Endothelial cell of umbilical vein (primary cell): ENCODE measurements at regions of chr7 and their contacts with region 1.

Region 1: DNA sequence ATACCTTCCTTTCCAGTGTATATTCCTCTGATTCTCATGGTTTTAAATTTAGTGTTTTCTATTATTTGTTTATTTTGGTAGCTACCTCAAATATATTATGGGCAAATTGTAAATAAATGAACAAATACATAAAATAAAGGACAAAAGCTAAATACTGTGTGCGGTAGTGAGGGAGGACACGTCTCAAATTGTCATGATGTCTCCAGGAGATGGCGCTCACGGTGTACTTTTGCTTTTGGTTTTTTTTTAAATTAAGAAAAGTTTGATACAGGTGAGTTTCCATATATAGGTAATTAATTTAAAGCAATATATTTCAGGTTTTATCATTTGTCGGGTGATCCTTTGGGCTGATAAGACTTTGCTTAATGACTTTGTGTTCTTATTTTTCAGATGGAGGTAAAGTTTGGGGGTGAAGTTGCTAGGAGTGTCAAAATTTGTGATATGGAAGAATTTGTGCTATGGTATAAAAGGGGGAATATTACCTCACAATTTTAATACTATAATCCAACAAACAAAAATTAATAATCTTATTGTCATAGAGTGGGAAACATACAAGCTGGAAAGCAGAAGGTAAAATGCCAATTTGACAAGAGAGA is 68.4 kb upstream of the TMEM229A start:
- DNase-seq: peak; percentile 44
- H3K4me3 ChIP-seq: no peak overlapping the region
- H3K27ac ChIP-seq: no peak overlapping the region
- H3K4me1 ChIP-seq: no peaks in the 10 kb centered on the region
- H3K27me3 ChIP-seq: no peaks in the 10 kb centered on the region
- CTCF ChIP-seq: peak; percentile 43 to 57
- POLR2A ChIP-seq: no peak

Region 2: DNA sequence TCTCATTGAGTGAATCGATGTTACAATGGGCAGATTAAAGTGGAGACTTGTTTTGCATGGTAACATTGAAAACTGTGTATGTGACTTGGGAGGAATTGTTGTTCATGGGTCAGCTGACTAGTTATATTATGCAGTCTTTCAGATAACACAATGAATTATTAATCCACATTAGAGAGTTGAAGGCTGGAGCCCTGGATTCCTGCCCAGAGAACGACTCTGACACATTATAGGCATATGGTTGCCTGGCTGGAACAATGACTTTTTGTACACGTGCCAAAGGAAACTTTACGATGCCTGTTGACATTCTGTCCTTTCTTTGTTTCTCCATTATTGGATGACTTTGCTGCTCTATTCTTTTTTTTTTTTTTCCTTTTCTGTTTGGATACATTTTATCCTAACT is 16.1 kb before region 1 on chr7:
- CTCF ChIA-PET with region 1: interaction called, 39 read pairs
- POLR2A ChIA-PET with region 1: no interaction called
- dilution Hi-C with region 1: no loop called
- intact Hi-C with region 1: no loop called
- DNase-seq: peak; percentile 99
- H3K4me3 ChIP-seq: no peak overlapping the region
- H3K27ac ChIP-seq: peak overlapping the region; percentile 38
- H3K4me1 ChIP-seq: peaks cover 23% of the 10 kb centered on the region
- H3K27me3 ChIP-seq: no peaks in the 10 kb centered on the region
- CTCF ChIP-seq: no peak
- POLR2A ChIP-seq: no peak

Region 3: GRCh38 chr7:124113045-124113444 is 11.8 kb after region 1 on chr7:
- CTCF ChIA-PET with region 1: interaction called, 35 read pairs
- POLR2A ChIA-PET with region 1: no interaction called
- dilution Hi-C with region 1: no loop called
- intact Hi-C with region 1: no loop called
- DNase-seq: no peak
- H3K4me3 ChIP-seq: no peak overlapping the region
- H3K27ac ChIP-seq: no peak overlapping the region
- H3K4me1 ChIP-seq: no peaks in the 10 kb centered on the region
- H3K27me3 ChIP-seq: peaks cover 0 to 7% of the 10 kb centered on the region in 2 experiments
- CTCF ChIP-seq: no peak
- POLR2A ChIP-seq: no peak

Region 4: GRCh38 chr7:124137664-124138063 is 36.4 kb after region 1 on chr7:
- CTCF ChIA-PET with region 1: no interaction called
- POLR2A ChIA-PET with region 1: no interaction called
- dilution Hi-C with region 1: no loop called
- intact Hi-C with region 1: no loop called
- DNase-seq: no peak
- H3K4me3 ChIP-seq: no peak overlapping the region
- H3K27ac ChIP-seq: no peak overlapping the region
- H3K4me1 ChIP-seq: no peaks in the 10 kb centered on the region
- H3K27me3 ChIP-seq: no peaks in the 10 kb centered on the region
- CTCF ChIP-seq: no peak
- POLR2A ChIP-seq: no peak

Region 5: DNA sequence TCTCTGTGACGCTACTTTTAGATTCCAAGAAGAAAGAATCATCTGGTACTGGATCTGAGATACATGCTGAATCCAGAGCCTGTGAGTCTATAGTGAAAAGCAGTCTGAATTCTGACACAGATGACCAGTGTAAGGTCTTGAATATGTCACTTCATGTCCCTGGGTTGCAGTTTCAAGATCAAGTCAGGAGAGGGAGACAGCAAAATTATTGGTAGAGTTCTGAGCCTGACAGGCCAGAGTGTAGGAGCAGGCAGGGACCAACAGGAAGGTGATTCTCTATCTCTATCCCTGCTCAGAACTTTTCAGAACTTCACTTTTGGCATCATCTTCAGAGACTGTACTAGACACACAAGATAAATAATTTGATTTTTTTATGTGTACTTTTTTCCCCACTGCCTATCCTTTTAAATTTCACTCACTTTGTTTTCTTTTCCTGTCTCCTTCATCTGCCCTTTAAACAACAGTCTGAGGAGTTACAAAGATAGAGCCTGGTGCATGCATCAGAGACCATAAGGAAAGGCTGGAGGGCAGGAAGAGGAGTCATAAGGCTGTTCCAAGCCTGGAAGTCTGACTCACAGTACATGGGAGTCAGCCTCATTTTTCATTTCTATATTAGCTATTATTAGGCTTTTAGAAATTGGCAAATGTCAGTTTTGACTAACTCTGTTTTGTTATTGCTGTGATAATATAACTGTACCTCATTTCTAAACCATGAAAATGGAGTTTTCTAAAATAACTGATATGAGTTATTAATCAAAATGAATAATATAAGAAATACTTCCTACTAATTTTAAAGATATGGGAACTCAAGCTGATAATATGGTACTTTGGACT is 51.8 kb after region 1 on chr7:
- CTCF ChIA-PET with region 1: interaction called, 26 read pairs
- POLR2A ChIA-PET with region 1: no interaction called
- dilution Hi-C with region 1: no loop called
- intact Hi-C with region 1: loop called (anchors 1 kb)
- DNase-seq: peak; percentile 87
- H3K4me3 ChIP-seq: no peak overlapping the region
- H3K27ac ChIP-seq: peak overlapping the region; percentile 63
- H3K4me1 ChIP-seq: peaks cover 21% of the 10 kb centered on the region
- H3K27me3 ChIP-seq: no peaks in the 10 kb centered on the region
- CTCF ChIP-seq: peak; percentile 22 to 31
- POLR2A ChIP-seq: no peak

Region 6: DNA sequence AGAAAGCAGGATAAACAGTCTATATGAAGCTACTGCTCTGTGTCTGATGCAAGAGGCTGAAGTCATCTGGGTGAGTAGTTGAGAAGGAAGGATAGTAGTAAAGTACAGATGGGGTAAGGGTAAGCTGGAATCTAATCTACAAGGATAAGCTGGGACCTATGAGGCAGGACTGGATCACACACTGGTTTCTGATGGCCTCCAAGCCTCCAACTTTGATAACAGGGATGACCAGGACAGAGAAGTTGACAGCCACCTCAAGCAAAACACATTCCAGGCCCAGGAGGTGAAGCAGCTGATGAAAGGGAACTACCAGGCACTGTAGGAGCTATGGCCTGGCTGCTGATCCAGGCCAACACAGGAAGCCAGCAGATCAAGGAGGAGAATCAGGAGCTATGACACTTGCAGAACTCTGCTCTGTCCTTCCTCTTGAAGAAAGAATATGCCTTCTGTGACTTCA is 209.7 kb after region 1 on chr7:
- CTCF ChIA-PET with region 1: no interaction called
- POLR2A ChIA-PET with region 1: no interaction called
- dilution Hi-C with region 1: no loop called
- intact Hi-C with region 1: no loop called
- DNase-seq: no peak
- H3K4me3 ChIP-seq: no peak overlapping the region
- H3K27ac ChIP-seq: no peak overlapping the region
- H3K4me1 ChIP-seq: no peaks in the 10 kb centered on the region
- H3K27me3 ChIP-seq: no peaks in the 10 kb centered on the region
- CTCF ChIP-seq: no peak
- POLR2A ChIP-seq: no peak

Region 7: DNA sequence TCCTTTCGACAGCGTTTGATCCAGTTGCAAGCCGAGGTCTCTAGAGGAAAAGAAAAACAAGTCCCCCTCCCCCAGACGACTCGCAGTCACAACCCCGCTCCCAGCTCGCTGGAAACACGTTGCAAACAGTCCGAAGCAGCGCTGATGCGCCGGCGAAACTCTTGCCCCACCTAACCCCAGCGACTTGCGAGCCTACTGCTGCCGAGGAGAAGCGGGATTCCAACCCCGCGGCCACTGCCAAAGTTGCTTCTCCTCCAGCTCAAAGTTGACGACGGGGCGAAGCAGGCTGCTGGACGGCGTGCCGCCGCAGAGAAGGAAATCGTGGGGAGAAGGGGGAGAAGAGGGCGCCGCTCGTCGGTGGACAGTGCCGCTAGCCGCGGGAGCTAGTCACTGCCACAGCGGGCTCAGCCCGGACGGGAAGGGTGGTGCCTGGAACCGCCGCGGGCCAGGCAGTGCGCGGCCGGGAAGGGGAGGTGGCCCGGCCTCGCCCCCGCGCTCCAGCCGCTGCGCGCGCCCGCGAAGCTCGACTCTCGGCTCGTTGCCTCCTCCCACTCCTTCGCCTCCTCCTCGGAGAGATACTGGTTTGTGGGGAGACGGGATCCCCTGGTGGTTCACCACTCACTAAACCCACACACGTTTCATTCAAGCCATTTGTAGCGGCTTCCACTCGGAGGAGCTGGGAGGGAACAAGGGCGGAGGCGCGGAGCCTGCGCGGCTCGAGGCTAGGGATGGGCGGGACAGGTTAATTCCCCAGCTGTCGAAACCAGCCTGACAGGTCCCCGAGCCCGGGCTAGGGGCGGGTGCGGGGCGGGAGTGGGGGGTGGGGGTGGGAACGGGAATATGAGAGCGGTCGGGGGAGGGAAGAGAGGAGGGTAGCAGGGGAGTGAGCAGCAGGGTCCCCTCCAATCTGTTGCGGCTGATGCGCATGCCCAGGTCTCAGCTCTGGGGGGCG is 664.4 kb after region 1 on chr7 and contains the start of gene GPR37:
- CTCF ChIA-PET with region 1: interaction called, 28 read pairs
- POLR2A ChIA-PET with region 1: no interaction called
- dilution Hi-C with region 1: no loop called
- intact Hi-C with region 1: no loop called
- DNase-seq: peak; percentile 73
- H3K4me3 ChIP-seq: peak within 1 kb of the TSS; percentile 24 to 52 (median 48)
- H3K27ac ChIP-seq: no peak within 1 kb of the TSS
- H3K4me1 ChIP-seq: peaks cover 4% of the 10 kb centered on the region
- H3K27me3 ChIP-seq: peaks cover 2 to 7% of the 10 kb centered on the region in 2 experiments
- CTCF ChIP-seq: no peak
- POLR2A ChIP-seq: no peak
- total RNA-seq, gene GPR37: 2.1 and 2.2 TPM in 2 replicates

Region 8: DNA sequence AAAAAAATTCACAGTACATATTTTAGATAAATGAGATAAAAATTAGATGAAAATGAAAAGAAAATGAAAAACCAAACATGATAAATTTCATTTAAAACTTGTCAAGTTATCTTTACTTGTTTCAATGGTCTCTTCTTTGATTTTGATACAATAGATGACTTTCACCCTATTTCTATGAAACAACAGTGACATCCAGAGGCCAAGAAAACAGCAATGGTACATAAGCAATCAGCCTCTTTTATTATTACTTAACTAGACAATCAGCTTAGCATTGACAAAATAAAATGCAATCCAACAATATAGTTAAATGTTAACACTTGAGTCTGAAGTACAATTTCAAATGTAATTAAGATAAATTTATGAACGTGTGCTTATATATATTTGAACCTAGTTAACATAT is 739.2 kb after region 1 on chr7:
- CTCF ChIA-PET with region 1: interaction called, 41 read pairs
- POLR2A ChIA-PET with region 1: no interaction called
- dilution Hi-C with region 1: no loop called
- intact Hi-C with region 1: loop called (anchors 5 kb)
- DNase-seq: peak; percentile 74
- H3K4me3 ChIP-seq: no peak overlapping the region
- H3K27ac ChIP-seq: no peak overlapping the region
- H3K4me1 ChIP-seq: peaks cover 17% of the 10 kb centered on the region
- H3K27me3 ChIP-seq: no peaks in the 10 kb centered on the region
- CTCF ChIP-seq: peak in 1 of 2 donors; percentile 5
- POLR2A ChIP-seq: no peak

Region 9: GRCh38 chr7:124856299-124856888 is 755.1 kb after region 1 on chr7:
- CTCF ChIA-PET with region 1: interaction called, 109 read pairs
- POLR2A ChIA-PET with region 1: no interaction called
- dilution Hi-C with region 1: no loop called
- intact Hi-C with region 1: loop called (anchors 1 kb)
- DNase-seq: peak; percentile 61
- H3K4me3 ChIP-seq: no peak overlapping the region
- H3K27ac ChIP-seq: no peak overlapping the region
- H3K4me1 ChIP-seq: no peaks in the 10 kb centered on the region
- H3K27me3 ChIP-seq: no peaks in the 10 kb centered on the region
- CTCF ChIP-seq: peak; percentile 31 to 44
- POLR2A ChIP-seq: no peak